T-cell (primary cell): ENCODE measurements at regions of chr5 and their contacts with region 1.

Region 1: DNA sequence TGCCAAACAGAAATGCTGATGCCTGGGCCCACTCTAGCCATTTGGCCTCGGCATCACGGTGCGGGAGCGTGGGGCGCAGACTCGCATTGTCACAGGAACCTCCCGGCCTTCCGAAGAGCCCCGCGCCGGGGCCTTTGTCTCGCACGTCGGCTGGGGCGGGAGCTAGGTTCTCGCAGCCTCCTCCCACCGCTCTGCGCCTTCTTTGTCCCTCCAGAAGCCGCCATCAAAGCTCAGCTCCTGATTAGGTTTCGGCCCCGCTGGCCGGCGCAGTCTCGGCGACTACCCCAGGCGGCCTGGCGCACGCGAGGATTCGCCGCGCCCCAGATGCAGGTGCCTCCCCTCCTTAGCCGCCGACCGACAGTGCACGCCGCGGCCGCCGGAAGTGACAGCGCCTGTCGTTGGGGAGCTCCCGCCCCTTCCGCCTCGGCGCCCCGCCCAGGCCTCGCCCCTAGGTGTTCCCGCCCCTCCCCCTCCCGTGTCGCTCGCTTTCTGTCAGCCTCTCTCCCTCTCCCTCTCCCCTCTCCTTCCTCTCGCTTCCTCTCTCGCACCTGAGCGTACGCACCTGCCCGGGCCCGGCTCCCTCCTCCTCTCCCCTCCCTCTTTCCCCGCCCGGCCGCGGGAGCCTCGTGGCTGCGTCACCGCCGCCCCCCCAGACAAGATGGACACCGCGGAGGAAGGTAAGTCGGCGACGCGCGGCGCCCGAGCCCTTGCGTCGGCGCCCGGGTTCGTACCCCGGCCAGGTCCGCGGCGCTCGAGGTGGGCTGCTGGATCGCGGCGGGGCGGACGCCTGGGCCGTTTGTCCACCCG is at the start of gene MARCHF6:
- DNase-seq: peak; percentile 88 to 97 (median 94)
- ATAC-seq: peak; percentile 88 to 95 (median 92)
- H3K4me3 ChIP-seq: peak within 1 kb of the TSS; percentile 71 to 87
- H3K4me3 Mint-ChIP-seq: peak within 1 kb of the TSS; percentile 98 to 100 (median 99)
- H3K27ac ChIP-seq: peak within 1 kb of the TSS; percentile 89
- H3K27ac Mint-ChIP-seq: peak within 1 kb of the TSS; percentile 97 to 98
- H3K4me1 ChIP-seq: peaks cover 14 to 25% of the 10 kb centered on the region in 2 experiments
- H3K4me1 Mint-ChIP-seq: peaks cover 44 to 47% (median 45%) of the 10 kb centered on the region in 3 donors
- H3K27me3 ChIP-seq: no peaks in the 10 kb centered on the region
- H3K27me3 Mint-ChIP-seq: no peaks in the 10 kb centered on the region
- total RNA-seq, gene MARCHF6: 146 to 185 (median 167) TPM

Region 2: GRCh38 chr5:10249948-10250803 is 103.3 kb before region 1 on chr5 and contains the start of gene CCT5:
- CTCF ChIA-PET with region 1: interaction called, 4 read pairs
- POLR2A ChIA-PET with region 1: interaction called in 1 of 2 experiments, 10 read pairs
- DNase-seq: peak; percentile 78 to 96 (median 88)
- ATAC-seq: peak; percentile 74 to 81 (median 76)
- H3K4me3 ChIP-seq: peak within 1 kb of the TSS; percentile 99
- H3K4me3 Mint-ChIP-seq: peak within 1 kb of the TSS; percentile 86 to 92 (median 86)
- H3K27ac ChIP-seq: peak within 1 kb of the TSS; percentile 98
- H3K27ac Mint-ChIP-seq: peak within 1 kb of the TSS; percentile 99
- H3K4me1 ChIP-seq: peaks cover 22 to 38% of the 10 kb centered on the region in 2 experiments
- H3K4me1 Mint-ChIP-seq: peaks cover 52 to 61% (median 53%) of the 10 kb centered on the region in 3 donors
- H3K27me3 ChIP-seq: no peaks in the 10 kb centered on the region
- H3K27me3 Mint-ChIP-seq: no peaks in the 10 kb centered on the region
- total RNA-seq, gene CCT5: 63.3 to 111 (median 105) TPM

Region 3: GRCh38 chr5:10364186-10364683 is 10.8 kb after region 1 on chr5:
- CTCF ChIA-PET with region 1: interaction called, 4 to 13 read pairs
- POLR2A ChIA-PET with region 1: interaction called in 1 of 2 experiments, 6 read pairs
- DNase-seq: peak in 1 of 35 experiments; percentile 55
- ATAC-seq: peak in 2 of 4 experiments; percentile 23 to 52
- H3K4me3 ChIP-seq: no peak overlapping the region
- H3K4me3 Mint-ChIP-seq: no peak overlapping the region
- H3K27ac ChIP-seq: no peak overlapping the region
- H3K27ac Mint-ChIP-seq: no peak overlapping the region
- H3K4me1 ChIP-seq: peaks cover 5 to 25% of the 10 kb centered on the region in 2 experiments
- H3K4me1 Mint-ChIP-seq: peaks cover 84 to 89% (median 87%) of the 10 kb centered on the region in 3 donors
- H3K27me3 ChIP-seq: no peaks in the 10 kb centered on the region
- H3K27me3 Mint-ChIP-seq: no peaks in the 10 kb centered on the region